Activated CD8-positive, alpha-beta T cell treated with anti-CD3 and anti-CD28 coated beads for 36 hours (primary cell): ENCODE measurements at regions of chr15 and their contacts with region 1.

Region 1: DNA sequence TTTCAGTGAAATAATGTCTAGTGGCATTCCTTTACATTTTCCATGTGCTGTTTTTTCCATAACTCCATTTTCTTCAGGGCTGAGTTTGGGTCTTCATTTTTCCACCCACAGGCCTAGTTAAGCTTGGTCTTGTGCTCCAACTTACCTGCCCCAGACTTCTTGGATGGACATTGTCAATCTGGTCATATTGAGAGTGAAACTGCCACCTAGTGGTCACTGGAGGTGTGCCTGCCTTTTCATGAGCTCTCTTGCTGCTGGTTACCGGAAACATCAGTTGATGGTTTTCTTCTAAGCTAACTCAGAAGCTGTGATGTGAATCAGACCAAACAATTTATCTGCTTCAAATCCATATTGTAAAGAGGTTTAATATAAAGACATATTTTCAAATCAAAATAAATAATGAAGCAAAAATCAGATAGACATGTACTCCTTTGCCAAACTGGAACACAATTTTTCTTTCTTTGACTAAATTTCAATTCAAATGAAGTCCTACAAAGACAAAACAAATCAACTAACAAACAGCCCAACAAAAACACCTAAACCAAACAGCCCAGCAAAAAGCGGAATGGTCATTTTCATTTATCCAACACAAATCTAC is 135.1 kb upstream of the RASGRP1 start:
- DNase-seq: peak; percentile 89
- ATAC-seq: peak; percentile 56
- H3K4me3 Mint-ChIP-seq: no peak overlapping the region
- H3K27ac Mint-ChIP-seq: peak overlapping the region; percentile 59
- H3K4me1 Mint-ChIP-seq: peaks cover 58% of the 10 kb centered on the region
- H3K27me3 Mint-ChIP-seq: no peaks in the 10 kb centered on the region
- CTCF ChIP-seq: peak; percentile 89

Region 2: GRCh38 chr15:38440353-38441129 is 259.2 kb before region 1 on chr15:
- CTCF ChIA-PET with region 1: interaction called, 225 read pairs
- POLR2A ChIA-PET with region 1: interaction called, 4 read pairs
- intact Hi-C with region 1: no loop called
- DNase-seq: peak; percentile 70
- ATAC-seq: peak; percentile 95
- H3K4me3 Mint-ChIP-seq: no peak overlapping the region
- H3K27ac Mint-ChIP-seq: no peak overlapping the region
- H3K4me1 Mint-ChIP-seq: peaks cover 9% of the 10 kb centered on the region
- H3K27me3 Mint-ChIP-seq: peaks cover 8% of the 10 kb centered on the region
- CTCF ChIP-seq: peak; percentile 96

Region 3: GRCh38 chr15:38461066-38461833 is 238.5 kb before region 1 on chr15:
- CTCF ChIA-PET with region 1: interaction called, 13 read pairs
- POLR2A ChIA-PET with region 1: interaction called, 3 read pairs
- intact Hi-C with region 1: no loop called
- DNase-seq: no peak
- ATAC-seq: peak; percentile 61
- H3K4me3 Mint-ChIP-seq: no peak overlapping the region
- H3K27ac Mint-ChIP-seq: no peak overlapping the region
- H3K4me1 Mint-ChIP-seq: peaks cover 48% of the 10 kb centered on the region
- H3K27me3 Mint-ChIP-seq: no peaks in the 10 kb centered on the region
- CTCF ChIP-seq: no peak

Region 4: DNA sequence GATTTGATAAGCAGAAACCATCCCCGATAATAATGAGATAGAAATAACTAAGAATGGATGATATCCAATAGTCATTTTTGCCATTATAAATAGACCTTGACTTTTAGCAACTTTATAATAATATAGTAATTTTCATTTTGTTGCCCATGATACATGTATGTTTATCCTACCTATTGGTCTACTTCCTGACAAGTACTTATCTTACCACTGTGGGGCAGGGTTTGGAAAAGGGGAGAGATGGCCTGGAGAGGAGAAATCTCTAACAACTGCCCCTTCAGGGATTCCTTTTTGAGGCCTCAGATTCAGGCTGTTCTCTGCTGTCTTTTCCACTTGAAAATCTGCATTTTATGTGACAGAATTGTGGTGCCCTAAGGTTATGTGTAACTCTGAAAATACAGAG is 203.6 kb before region 1 on chr15:
- CTCF ChIA-PET with region 1: interaction called, 19 read pairs
- POLR2A ChIA-PET with region 1: interaction called, 12 read pairs
- intact Hi-C with region 1: no loop called
- DNase-seq: no peak
- ATAC-seq: no peak
- H3K4me3 Mint-ChIP-seq: no peak overlapping the region
- H3K27ac Mint-ChIP-seq: peak overlapping the region; percentile 84
- H3K4me1 Mint-ChIP-seq: peaks cover 30% of the 10 kb centered on the region
- H3K27me3 Mint-ChIP-seq: no peaks in the 10 kb centered on the region
- CTCF ChIP-seq: no peak

Region 5: DNA sequence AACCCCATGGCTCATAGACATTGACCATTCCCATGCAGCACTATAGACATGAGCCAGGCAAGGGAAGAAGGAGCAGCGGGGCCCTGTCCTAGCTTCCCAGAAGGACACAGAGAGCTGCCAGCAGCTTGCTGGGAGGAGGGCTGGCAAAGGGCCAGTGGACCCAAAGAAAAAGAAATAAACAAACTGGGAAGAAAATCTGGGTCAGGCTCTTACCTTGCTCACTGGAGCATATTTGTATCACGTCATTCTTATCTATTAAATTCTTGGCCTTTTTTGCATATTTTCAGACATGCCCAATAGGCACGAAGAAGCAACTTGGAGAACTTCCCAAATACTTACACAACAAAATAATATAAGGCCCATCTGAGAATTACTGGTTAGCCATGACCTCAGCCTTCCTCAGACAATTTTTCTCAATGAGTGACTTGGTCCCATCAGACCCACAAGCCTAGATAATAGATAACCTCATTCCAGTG is 163.5 kb before region 1 on chr15:
- CTCF ChIA-PET with region 1: interaction called, 15 read pairs
- POLR2A ChIA-PET with region 1: interaction called, 5 read pairs
- intact Hi-C with region 1: no loop called
- DNase-seq: no peak
- ATAC-seq: no peak
- H3K4me3 Mint-ChIP-seq: no peak overlapping the region
- H3K27ac Mint-ChIP-seq: peak overlapping the region; percentile 97
- H3K4me1 Mint-ChIP-seq: peaks cover 98% of the 10 kb centered on the region
- H3K27me3 Mint-ChIP-seq: no peaks in the 10 kb centered on the region
- CTCF ChIP-seq: no peak

Region 6: GRCh38 chr15:38610748-38611147 is 89.0 kb before region 1 on chr15:
- CTCF ChIA-PET with region 1: interaction called, 14 read pairs
- POLR2A ChIA-PET with region 1: interaction called, 3 read pairs
- intact Hi-C with region 1: no loop called
- DNase-seq: peak; percentile 84
- ATAC-seq: peak; percentile 64
- H3K4me3 Mint-ChIP-seq: peak overlapping the region; percentile 5
- H3K27ac Mint-ChIP-seq: peak overlapping the region; percentile 89
- H3K4me1 Mint-ChIP-seq: peaks cover 73% of the 10 kb centered on the region
- H3K27me3 Mint-ChIP-seq: no peaks in the 10 kb centered on the region
- CTCF ChIP-seq: no peak

Region 7: GRCh38 chr15:38788918-38789317 is 89.2 kb after region 1 on chr15:
- CTCF ChIA-PET with region 1: no interaction called
- POLR2A ChIA-PET with region 1: no interaction called
- intact Hi-C with region 1: no loop called
- DNase-seq: no peak
- ATAC-seq: no peak
- H3K4me3 Mint-ChIP-seq: no peak overlapping the region
- H3K27ac Mint-ChIP-seq: no peak overlapping the region
- H3K4me1 Mint-ChIP-seq: no peaks in the 10 kb centered on the region
- H3K27me3 Mint-ChIP-seq: no peaks in the 10 kb centered on the region
- CTCF ChIP-seq: no peak

Region 8: GRCh38 chr15:39453500-39454073 is 753.9 kb after region 1 on chr15:
- CTCF ChIA-PET with region 1: no interaction called
- POLR2A ChIA-PET with region 1: no interaction called
- intact Hi-C with region 1: no loop called
- DNase-seq: peak; percentile 37
- ATAC-seq: peak; percentile 49
- H3K4me3 Mint-ChIP-seq: no peak overlapping the region
- H3K27ac Mint-ChIP-seq: no peak overlapping the region
- H3K4me1 Mint-ChIP-seq: peaks cover 5% of the 10 kb centered on the region
- H3K27me3 Mint-ChIP-seq: no peaks in the 10 kb centered on the region
- CTCF ChIP-seq: no peak